ENCODE measurements at regions of chr17 and their contacts with region 1.

Region 1: DNA sequence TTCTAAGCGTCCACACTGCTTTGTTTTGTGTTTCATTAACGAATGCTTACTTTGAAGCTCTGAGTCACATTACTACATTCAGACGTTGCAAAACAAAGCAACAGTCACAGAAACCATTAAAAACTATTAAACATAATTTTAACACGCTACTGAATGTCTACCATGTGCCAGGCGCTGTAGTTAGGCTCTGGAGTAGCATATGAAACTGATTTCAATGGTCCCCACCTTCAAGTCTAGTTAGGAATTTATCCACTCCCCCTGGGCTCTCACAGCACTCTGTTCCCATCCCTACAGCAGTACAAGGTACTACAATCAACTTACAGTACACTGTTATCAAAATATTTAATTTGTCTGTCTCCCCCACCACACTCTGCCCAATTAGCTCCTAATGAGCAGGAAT is 631 bp downstream of the UTP6 start:
- DNase-seq: peak; percentile 33
- H3K4me3 Mint-ChIP-seq: no peak overlapping the region
- H3K27ac Mint-ChIP-seq: no peak overlapping the region
- H3K4me1 Mint-ChIP-seq: no peaks in the 10 kb centered on the region
- H3K27me3 Mint-ChIP-seq: no peaks in the 10 kb centered on the region
- CTCF ChIP-seq: no peak

Region 2: DNA sequence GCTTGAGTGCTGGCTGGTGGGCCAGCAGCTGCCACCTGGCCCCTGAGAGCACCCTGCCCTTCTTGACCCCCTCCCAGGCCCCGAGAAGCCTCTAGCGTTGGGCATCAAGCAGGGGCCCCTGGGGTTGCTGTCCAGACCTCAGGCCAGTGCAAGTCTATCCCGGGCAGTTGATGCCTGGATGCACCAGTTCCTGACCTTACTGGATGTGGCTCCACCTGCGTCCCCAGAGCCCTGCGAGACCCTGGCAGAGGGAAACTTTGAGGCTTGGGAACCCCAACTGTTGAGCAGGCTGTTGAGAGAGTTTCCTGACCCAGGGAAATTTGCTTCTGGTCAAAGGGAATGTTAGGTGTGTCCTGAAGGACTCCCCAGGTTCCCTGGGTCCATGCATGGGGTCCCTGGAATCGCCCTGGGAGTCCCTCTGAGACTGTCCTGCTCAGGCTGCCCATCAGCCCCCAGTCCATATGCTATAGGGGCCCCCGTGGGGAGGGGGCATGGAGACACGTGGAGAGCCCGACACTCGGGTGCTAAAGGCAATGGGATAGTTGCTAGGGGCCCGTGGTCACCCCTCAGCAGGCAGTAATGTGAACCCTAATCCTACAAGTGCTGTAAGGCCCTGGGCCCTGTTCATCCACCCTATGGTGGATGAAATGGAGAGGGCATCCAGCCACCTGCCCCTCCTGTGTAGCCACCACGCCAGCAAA is 463.0 kb before region 1 on chr17:
- CTCF ChIA-PET with region 1: no interaction called
- POLR2A ChIA-PET with region 1: no interaction called
- intact Hi-C with region 1: loop called (anchors 5 kb)
- DNase-seq: no peak
- H3K4me3 Mint-ChIP-seq: no peak overlapping the region
- H3K27ac Mint-ChIP-seq: no peak overlapping the region
- H3K4me1 Mint-ChIP-seq: no peaks in the 10 kb centered on the region
- H3K27me3 Mint-ChIP-seq: peaks cover 34% of the 10 kb centered on the region
- CTCF ChIP-seq: no peak

Region 3: DNA sequence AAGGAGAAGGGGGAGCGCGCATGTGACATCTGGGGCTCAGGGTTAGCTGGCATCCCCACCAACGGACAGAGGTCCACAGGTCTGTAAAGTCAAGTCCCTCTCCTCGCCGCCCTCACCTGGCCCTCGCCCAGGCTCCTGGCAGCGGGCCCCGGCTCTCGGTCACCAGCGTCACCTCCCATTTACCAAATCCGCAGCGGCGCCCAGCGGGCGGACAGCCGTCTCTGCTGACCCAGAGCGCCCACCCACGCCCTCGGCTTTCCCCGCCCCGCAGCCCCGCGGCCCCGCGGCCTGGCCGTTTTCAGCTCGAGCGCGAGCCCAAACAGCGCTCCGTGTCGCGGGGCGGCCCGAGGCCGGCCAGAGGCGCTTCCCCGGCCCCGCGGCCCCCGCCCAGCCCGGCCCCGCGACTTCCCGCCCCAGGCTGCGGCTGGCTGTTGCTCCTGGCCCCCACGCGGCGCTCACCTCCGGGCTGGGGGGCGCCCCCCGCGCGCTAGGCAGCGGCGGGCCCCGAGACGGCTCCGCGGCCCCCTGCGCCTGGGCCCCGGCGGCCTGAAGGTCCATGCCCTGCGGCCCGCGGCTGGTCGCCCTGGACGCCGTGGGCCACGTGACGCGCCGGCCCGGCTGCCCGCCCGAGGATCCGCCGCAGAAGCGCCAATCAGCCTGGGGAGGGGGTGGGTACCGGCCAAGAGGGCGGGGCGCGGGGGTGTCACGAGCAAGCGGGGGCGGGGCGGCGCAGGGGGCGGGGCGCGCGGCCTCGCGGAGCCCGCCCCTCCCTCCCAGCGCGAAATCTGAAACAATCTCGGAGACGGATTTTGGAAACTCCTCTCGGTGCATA is 42.0 kb before region 1 on chr17 and contains the start of gene COPRS:
- CTCF ChIA-PET with region 1: interaction called, 3 read pairs
- POLR2A ChIA-PET with region 1: interaction called, 10 read pairs
- intact Hi-C with region 1: no loop called
- DNase-seq: peak; percentile 80
- H3K4me3 Mint-ChIP-seq: peak within 1 kb of the TSS; percentile 68
- H3K27ac Mint-ChIP-seq: no peak within 1 kb of the TSS
- H3K4me1 Mint-ChIP-seq: peaks cover 25% of the 10 kb centered on the region
- H3K27me3 Mint-ChIP-seq: no peaks in the 10 kb centered on the region
- CTCF ChIP-seq: no peak
- total RNA-seq, gene COPRS: 41.2 and 46.8 TPM in 2 replicates

Region 4: DNA sequence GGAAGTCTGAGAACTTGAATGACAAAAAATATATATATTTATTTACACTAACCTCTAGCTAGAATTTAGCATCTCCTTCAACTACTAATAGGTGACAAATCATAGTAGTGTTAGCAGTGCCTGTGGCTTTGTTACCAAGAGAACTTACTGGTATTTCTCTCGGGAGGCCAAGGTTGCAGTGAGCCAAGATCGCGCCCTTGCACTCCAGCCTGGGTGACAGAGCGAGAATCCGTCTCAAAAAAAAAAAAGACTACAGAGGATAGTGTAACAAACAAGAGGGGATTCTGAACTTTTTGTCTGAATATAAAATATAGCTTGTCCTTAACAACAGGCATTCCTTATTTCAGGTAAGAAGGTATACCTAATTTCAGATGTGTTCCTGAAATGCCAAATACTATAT is 34.6 kb after region 1 on chr17:
- CTCF ChIA-PET with region 1: no interaction called
- POLR2A ChIA-PET with region 1: interaction called, 25 read pairs
- intact Hi-C with region 1: no loop called
- DNase-seq: no peak
- H3K4me3 Mint-ChIP-seq: no peak overlapping the region
- H3K27ac Mint-ChIP-seq: no peak overlapping the region
- H3K4me1 Mint-ChIP-seq: no peaks in the 10 kb centered on the region
- H3K27me3 Mint-ChIP-seq: no peaks in the 10 kb centered on the region
- CTCF ChIP-seq: no peak

Region 5: DNA sequence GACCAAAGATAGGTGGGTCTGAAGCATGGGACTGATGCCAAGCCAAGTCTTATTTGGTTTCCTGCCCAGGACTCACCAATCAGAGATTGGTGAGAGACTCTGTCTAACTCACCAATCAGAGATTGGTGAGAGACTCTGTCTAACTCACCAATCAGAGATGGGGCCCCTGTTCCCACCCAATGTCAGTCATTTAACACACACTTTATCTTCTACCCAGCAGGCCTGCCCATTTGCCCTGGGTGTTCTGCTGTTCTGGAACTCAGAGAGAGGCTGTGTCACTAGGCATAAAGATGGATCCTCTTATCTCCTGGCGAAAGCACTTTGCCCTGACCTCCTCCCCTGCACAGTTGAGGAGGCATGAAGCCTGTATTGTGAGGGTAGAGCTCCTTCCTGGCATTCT is 236.0 kb after region 1 on chr17:
- CTCF ChIA-PET with region 1: no interaction called
- POLR2A ChIA-PET with region 1: no interaction called
- intact Hi-C with region 1: loop called (anchors 5 kb)
- DNase-seq: no peak
- H3K4me3 Mint-ChIP-seq: no peak overlapping the region
- H3K27ac Mint-ChIP-seq: no peak overlapping the region
- H3K4me1 Mint-ChIP-seq: peaks cover 7% of the 10 kb centered on the region
- H3K27me3 Mint-ChIP-seq: no peaks in the 10 kb centered on the region
- CTCF ChIP-seq: no peak

Region 6: GRCh38 chr17:32215696-32216095 is 314.8 kb after region 1 on chr17:
- CTCF ChIA-PET with region 1: no interaction called
- POLR2A ChIA-PET with region 1: no interaction called
- intact Hi-C with region 1: no loop called
- DNase-seq: no peak
- H3K4me3 Mint-ChIP-seq: no peak overlapping the region
- H3K27ac Mint-ChIP-seq: no peak overlapping the region
- H3K4me1 Mint-ChIP-seq: no peaks in the 10 kb centered on the region
- H3K27me3 Mint-ChIP-seq: no peaks in the 10 kb centered on the region
- CTCF ChIP-seq: no peak

Measured in MCF 10A (cell line).